ENCODE measurements at regions of chr6 and their contacts with region 1.

Region 1: GRCh38 chr6:125790358-125791150 is at the start of gene NCOA7:
- DNase-seq: peak; percentile 85 to 86
- ATAC-seq: peak; percentile 89 to 97 (median 95)
- H3K4me3 ChIP-seq: peak within 1 kb of the TSS; percentile 68 to 96 (median 87)
- H3K27ac ChIP-seq: peak within 1 kb of the TSS; percentile 92 to 98 (median 96)
- H3K4me1 ChIP-seq: peaks cover 10 to 54% (median 33%) of the 10 kb centered on the region in 9 donors
- H3K27me3 ChIP-seq: no peaks in the 10 kb centered on the region
- CTCF ChIP-seq: peak in 1 of 9 donors; percentile 14
- total RNA-seq, gene NCOA7: 6.2 to 21.3 (median 11.1) TPM

Region 2: GRCh38 chr6:125844989-125845388 is 54.4 kb after region 1 on chr6:
- intact Hi-C with region 1: loop called in 5 of 10 experiments (anchors 2 to 10 kb)
- DNase-seq: peak in 1 of 2 donors; percentile 65
- ATAC-seq: peak; percentile 86 to 92 (median 90)
- H3K4me3 ChIP-seq: peak overlapping the region in 1 of 10 donors; percentile 0
- H3K27ac ChIP-seq: peak overlapping the region in 9 of 10 donors; percentile 11 to 68 (median 51)
- H3K4me1 ChIP-seq: peaks cover 2 to 39% (median 31%) of the 10 kb centered on the region in 9 donors
- H3K27me3 ChIP-seq: no peaks in the 10 kb centered on the region
- CTCF ChIP-seq: no peak

Region 3: DNA sequence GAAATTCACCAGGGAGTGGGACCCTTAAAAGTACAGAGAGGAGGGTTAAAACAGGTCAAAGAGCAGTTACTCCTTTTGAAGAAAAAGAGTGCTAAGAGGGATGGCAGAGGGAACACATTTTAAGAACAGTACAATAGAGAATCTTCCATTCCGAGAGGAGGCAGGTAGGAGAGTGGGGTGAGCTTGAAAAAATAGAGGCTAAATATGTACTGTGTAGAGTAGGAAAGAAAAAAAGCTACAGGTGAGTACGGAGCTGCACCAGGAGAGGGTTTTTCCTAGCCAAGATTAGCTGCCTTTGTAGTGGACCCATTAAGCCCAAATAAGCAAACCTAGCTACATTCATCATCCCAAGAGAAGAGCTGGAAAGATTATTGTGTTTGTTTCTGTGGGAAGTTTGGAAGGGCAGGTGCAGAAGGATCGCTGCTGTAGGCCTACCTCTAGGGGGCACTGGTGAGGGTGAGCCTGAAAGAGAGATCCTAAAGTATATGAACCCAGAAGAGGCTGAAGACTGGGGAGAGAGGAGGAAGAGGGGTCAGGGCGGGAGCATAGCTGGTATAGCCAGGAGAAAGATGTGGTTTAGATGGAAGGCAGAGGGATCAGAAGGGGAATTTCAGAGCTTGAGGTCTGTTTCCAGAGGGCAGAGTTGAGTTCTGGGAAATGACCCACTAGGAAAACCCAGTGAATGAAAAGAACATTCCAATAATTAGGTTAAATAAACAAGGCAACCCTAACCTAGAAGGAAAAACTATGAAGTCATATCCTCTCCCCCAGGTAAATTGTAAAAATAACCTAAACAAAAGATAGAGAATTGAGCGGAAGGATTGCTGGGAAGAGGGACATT is 115.8 kb after region 1 on chr6:
- intact Hi-C with region 1: loop called in 1 of 10 experiments (anchors 5 kb)
- DNase-seq: peak; percentile 16 to 37
- ATAC-seq: peak in 2 of 8 donors; percentile 39 to 55
- H3K4me3 ChIP-seq: no peak overlapping the region
- H3K27ac ChIP-seq: no peak overlapping the region
- H3K4me1 ChIP-seq: peaks cover 0 to 22% (median 0%) of the 10 kb centered on the region in 9 donors
- H3K27me3 ChIP-seq: no peaks in the 10 kb centered on the region
- CTCF ChIP-seq: peak in 8 of 9 donors; percentile 40 to 83 (median 56)

Measured in heart right ventricle (tissue), 16 donors.